ENCODE measurements at regions of chr12 and their contacts with region 1.

Region 1: GRCh38 chr12:85866986-85867776 is 6.9 kb upstream of the NTS start:
- DNase-seq: no peak
- H3K4me3 ChIP-seq: peak overlapping the region in 2 of 4 donors; percentile 4 to 10
- H3K27ac ChIP-seq: no peak overlapping the region
- H3K4me1 ChIP-seq: no peaks in the 10 kb centered on the region
- H3K27me3 ChIP-seq: peaks cover 0 to 6% (median 0%) of the 10 kb centered on the region in 4 donors
- CTCF ChIP-seq: peak; percentile 62 to 78 (median 69)
- EP300 ChIP-seq: no peak
- POLR2A ChIP-seq: no peak

Region 2: GRCh38 chr12:85468356-85469157 is 398.6 kb before region 1 on chr12:
- intact Hi-C with region 1: loop called (anchors 2 kb)
- DNase-seq: no peak
- H3K4me3 ChIP-seq: peak overlapping the region; percentile 44 to 57 (median 46)
- H3K27ac ChIP-seq: no peak overlapping the region
- H3K4me1 ChIP-seq: peaks cover 0 to 5% (median 5%) of the 10 kb centered on the region in 4 donors
- H3K27me3 ChIP-seq: peaks cover 0 to 24% (median 0%) of the 10 kb centered on the region in 4 donors
- CTCF ChIP-seq: peak; percentile 62 to 76 (median 65)
- EP300 ChIP-seq: no peak
- POLR2A ChIP-seq: no peak

Region 3: DNA sequence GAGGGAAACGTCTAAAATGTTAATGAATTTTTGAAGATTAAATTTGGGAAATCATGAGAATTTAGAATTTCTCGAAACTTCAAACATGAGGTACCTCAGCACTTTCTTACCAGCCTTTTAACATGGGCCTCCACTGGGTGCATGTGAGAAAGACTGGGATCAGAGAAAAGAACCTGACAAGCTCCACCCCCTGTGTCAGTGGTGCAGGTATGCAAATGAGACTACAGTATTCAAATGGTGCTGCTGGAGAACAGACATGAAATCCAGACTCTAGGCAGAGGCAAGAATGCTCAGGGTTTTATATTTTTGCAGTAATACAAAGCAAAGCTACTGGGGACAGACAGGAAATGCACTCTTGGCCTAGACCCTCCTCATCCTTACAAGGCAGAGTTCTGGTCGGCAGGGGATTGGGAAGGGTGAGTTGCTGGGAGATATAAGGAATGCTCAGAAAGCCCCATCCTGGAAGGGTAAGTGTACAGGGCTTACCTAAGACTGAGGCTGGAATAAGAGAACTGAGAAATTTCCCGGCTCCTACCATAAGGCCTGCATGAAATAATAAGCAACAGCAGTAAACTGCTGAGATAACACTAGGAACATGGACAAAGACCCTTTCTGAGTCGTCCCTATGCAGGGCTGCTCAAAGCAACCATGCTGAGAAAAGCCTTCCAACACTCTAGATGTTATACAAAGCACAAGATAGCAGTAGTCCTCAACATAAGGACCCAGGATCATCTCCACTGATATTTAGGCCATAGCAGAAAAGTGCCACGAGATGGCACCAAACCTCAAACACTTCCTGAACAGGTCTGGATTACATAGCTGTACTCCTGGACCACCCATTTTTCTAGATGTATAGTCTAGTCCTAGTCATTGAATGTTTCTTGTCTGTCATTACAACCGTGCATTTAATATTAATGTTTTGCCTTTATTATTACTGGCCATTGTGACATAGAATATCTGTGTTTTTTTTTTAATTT is 291.8 kb before region 1 on chr12:
- intact Hi-C with region 1: loop called (anchors 2 kb)
- DNase-seq: no peak
- H3K4me3 ChIP-seq: no peak overlapping the region
- H3K27ac ChIP-seq: no peak overlapping the region
- H3K4me1 ChIP-seq: no peaks in the 10 kb centered on the region
- H3K27me3 ChIP-seq: no peaks in the 10 kb centered on the region
- CTCF ChIP-seq: peak; percentile 32 to 59 (median 43)
- EP300 ChIP-seq: no peak
- POLR2A ChIP-seq: no peak

Measured in esophagus muscularis mucosa (tissue), 4 donors.